CD4-positive, alpha-beta T cell (primary cell): ENCODE measurements at regions of chr9 and their contacts with region 1.

Region 1: GRCh38 chr9:91036826-91037510 is 235.3 kb downstream of the SYK start:
- DNase-seq: peak; percentile 20 to 75 (median 44)
- ATAC-seq: peak; percentile 90
- H3K4me3 ChIP-seq: no peak overlapping the region
- H3K4me3 Mint-ChIP-seq: no peak overlapping the region
- H3K27ac ChIP-seq: no peak overlapping the region
- H3K27ac Mint-ChIP-seq: no peak overlapping the region
- H3K4me1 ChIP-seq: peaks cover 15% of the 10 kb centered on the region
- H3K4me1 Mint-ChIP-seq: peaks cover 10% of the 10 kb centered on the region
- H3K27me3 ChIP-seq: peaks cover 0 to 8% of the 10 kb centered on the region in 2 experiments
- H3K27me3 Mint-ChIP-seq: peaks cover 39% of the 10 kb centered on the region
- CTCF ChIP-seq: peak; percentile 54

Region 2: GRCh38 chr9:89437000-89437631 is 1599.9 kb before region 1 on chr9:
- CTCF ChIA-PET with region 1: no interaction called
- POLR2A ChIA-PET with region 1: no interaction called
- intact Hi-C with region 1: no loop called
- DNase-seq: peak; percentile 37 to 90 (median 66)
- ATAC-seq: peak; percentile 92
- H3K4me3 ChIP-seq: peak overlapping the region; percentile 6
- H3K4me3 Mint-ChIP-seq: peak overlapping the region; percentile 82
- H3K27ac ChIP-seq: peak overlapping the region; percentile 0 to 57
- H3K27ac Mint-ChIP-seq: peak overlapping the region; percentile 96
- H3K4me1 ChIP-seq: peaks cover 99% of the 10 kb centered on the region
- H3K4me1 Mint-ChIP-seq: peaks cover 92% of the 10 kb centered on the region
- H3K27me3 ChIP-seq: no peaks in the 10 kb centered on the region
- H3K27me3 Mint-ChIP-seq: no peaks in the 10 kb centered on the region
- CTCF ChIP-seq: no peak

Region 3: GRCh38 chr9:90914868-90915483 is 122.0 kb before region 1 on chr9:
- CTCF ChIA-PET with region 1: no interaction called
- POLR2A ChIA-PET with region 1: no interaction called
- intact Hi-C with region 1: loop called in 1 of 2 experiments (anchors 5 kb)
- DNase-seq: peak; percentile 58 to 87 (median 64)
- ATAC-seq: peak; percentile 95
- H3K4me3 ChIP-seq: no peak overlapping the region
- H3K4me3 Mint-ChIP-seq: no peak overlapping the region
- H3K27ac ChIP-seq: no peak overlapping the region
- H3K27ac Mint-ChIP-seq: no peak overlapping the region
- H3K4me1 ChIP-seq: no peaks in the 10 kb centered on the region
- H3K4me1 Mint-ChIP-seq: no peaks in the 10 kb centered on the region
- H3K27me3 ChIP-seq: no peaks in the 10 kb centered on the region
- H3K27me3 Mint-ChIP-seq: no peaks in the 10 kb centered on the region
- CTCF ChIP-seq: peak; percentile 93

Region 4: DNA sequence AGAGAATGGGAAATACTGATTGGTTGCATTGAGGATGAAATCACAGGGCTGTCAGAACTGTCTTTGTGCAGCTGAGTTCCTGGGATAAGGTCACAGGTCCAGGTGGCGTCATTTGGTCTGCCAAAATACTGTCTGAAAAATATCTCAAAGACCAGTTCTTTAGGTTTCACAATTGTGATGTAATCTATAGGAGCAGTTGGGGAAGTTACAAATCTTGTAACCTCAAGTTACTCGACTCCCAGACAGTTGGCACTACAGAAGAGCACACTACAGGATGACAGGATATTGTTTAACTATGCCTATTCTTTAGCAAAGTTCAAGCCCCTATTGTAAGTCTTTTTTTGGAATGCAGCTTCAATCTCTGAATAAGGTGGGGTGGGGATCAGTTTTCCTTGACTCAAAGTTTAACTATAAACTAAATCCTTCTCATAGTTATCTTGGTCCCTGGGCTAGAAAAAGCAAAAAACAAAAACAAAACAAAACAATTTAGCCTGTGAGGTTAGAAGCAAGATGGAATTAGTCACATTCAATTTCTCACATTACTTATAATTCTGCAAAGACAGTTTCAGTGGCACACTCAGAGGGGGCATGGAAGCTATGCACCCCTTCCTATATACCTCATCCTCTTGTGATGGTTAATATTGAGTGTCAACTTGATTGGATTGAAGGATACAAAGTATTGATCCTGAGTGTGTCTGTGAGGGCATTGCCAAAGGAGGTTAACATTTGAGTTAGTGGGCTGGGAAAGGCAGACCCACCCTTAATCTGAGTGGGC is 48.7 kb after region 1 on chr9:
- CTCF ChIA-PET with region 1: no interaction called
- POLR2A ChIA-PET with region 1: no interaction called
- intact Hi-C with region 1: no loop called
- DNase-seq: peak in 3 of 14 experiments; percentile 6 to 41 (median 25)
- ATAC-seq: no peak
- H3K4me3 ChIP-seq: no peak overlapping the region
- H3K4me3 Mint-ChIP-seq: no peak overlapping the region
- H3K27ac ChIP-seq: no peak overlapping the region
- H3K27ac Mint-ChIP-seq: no peak overlapping the region
- H3K4me1 ChIP-seq: no peaks in the 10 kb centered on the region
- H3K4me1 Mint-ChIP-seq: no peaks in the 10 kb centered on the region
- H3K27me3 ChIP-seq: no peaks in the 10 kb centered on the region
- H3K27me3 Mint-ChIP-seq: no peaks in the 10 kb centered on the region
- CTCF ChIP-seq: no peak

Region 5: GRCh38 chr9:91253488-91253887 is 216.5 kb after region 1 on chr9:
- CTCF ChIA-PET with region 1: no interaction called
- POLR2A ChIA-PET with region 1: no interaction called
- intact Hi-C with region 1: loop called (anchors 1 to 10 kb)
- DNase-seq: peak in 4 of 14 experiments; percentile 10 to 65 (median 48)
- ATAC-seq: peak; percentile 57
- H3K4me3 ChIP-seq: no peak overlapping the region
- H3K4me3 Mint-ChIP-seq: no peak overlapping the region
- H3K27ac ChIP-seq: no peak overlapping the region
- H3K27ac Mint-ChIP-seq: no peak overlapping the region
- H3K4me1 ChIP-seq: peaks cover 6% of the 10 kb centered on the region
- H3K4me1 Mint-ChIP-seq: no peaks in the 10 kb centered on the region
- H3K27me3 ChIP-seq: no peaks in the 10 kb centered on the region
- H3K27me3 Mint-ChIP-seq: no peaks in the 10 kb centered on the region
- CTCF ChIP-seq: no peak

Region 6: DNA sequence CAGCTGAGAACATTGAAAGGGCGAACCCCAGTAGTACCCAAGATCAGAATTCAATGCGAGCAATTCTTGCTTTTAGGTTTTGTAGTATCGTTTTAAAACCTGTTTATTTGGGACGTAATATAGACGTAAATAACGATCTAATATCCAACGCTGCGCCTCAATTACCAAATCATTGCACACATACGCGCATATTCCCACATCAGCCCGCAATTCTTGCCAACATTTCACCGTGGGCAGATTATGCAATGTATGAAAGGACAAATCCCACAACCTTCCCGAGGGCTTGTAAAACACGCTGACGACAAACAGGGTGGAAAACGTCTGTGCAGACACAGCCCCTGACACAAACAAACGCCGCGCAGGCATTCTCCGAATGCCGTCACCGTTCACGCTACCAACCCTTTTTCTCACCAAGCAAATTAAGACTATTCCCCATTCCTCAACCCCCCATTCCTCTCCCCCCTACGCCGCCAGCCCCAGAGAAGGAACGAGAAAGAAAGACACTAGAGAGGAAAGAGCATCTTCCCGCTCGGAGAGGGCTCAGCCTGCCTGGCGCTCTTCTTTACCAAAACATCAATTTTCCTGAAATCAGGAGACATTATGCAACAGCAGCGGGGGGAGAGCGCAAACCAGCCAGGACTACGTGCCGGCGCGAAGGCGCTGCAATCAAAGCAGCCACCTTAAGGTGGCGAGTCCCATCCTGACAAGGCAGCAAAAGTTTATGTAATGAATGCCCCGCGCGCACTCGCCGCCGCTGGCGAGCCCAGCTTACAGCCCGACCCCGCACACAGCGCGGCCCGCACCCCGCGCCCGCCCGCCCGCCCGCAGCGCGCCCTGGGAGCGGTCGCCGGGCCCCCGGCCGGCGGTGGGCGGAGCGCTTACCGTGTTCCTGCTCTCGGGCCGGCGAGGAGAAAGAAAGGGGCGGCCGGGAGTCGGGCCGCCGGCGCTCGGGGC is 386.1 kb after region 1 on chr9:
- CTCF ChIA-PET with region 1: interaction called, 13 read pairs
- POLR2A ChIA-PET with region 1: interaction called, 7 read pairs
- intact Hi-C with region 1: loop called (anchors 1 kb)
- DNase-seq: peak; percentile 22 to 85 (median 49)
- ATAC-seq: peak; percentile 50
- H3K4me3 ChIP-seq: peak overlapping the region; percentile 73
- H3K4me3 Mint-ChIP-seq: peak overlapping the region; percentile 96
- H3K27ac ChIP-seq: no peak overlapping the region
- H3K27ac Mint-ChIP-seq: peak overlapping the region; percentile 82
- H3K4me1 ChIP-seq: peaks cover 45% of the 10 kb centered on the region
- H3K4me1 Mint-ChIP-seq: peaks cover 45% of the 10 kb centered on the region
- H3K27me3 ChIP-seq: peaks cover 22 to 42% of the 10 kb centered on the region in 2 experiments
- H3K27me3 Mint-ChIP-seq: peaks cover 52% of the 10 kb centered on the region
- CTCF ChIP-seq: peak; percentile 16

Region 7: GRCh38 chr9:91727316-91727861 is 690.4 kb after region 1 on chr9:
- CTCF ChIA-PET with region 1: interaction called, 3 read pairs
- POLR2A ChIA-PET with region 1: no interaction called
- intact Hi-C with region 1: loop called in 1 of 2 experiments (anchors 2 kb)
- DNase-seq: peak in 4 of 14 experiments; percentile 21 to 58 (median 40)
- ATAC-seq: no peak
- H3K4me3 ChIP-seq: no peak overlapping the region
- H3K4me3 Mint-ChIP-seq: no peak overlapping the region
- H3K27ac ChIP-seq: no peak overlapping the region
- H3K27ac Mint-ChIP-seq: no peak overlapping the region
- H3K4me1 ChIP-seq: no peaks in the 10 kb centered on the region
- H3K4me1 Mint-ChIP-seq: no peaks in the 10 kb centered on the region
- H3K27me3 ChIP-seq: no peaks in the 10 kb centered on the region
- H3K27me3 Mint-ChIP-seq: peaks cover 8% of the 10 kb centered on the region
- CTCF ChIP-seq: peak; percentile 66